Panc1 (cell line): ENCODE measurements at regions of chr7 and their contacts with region 1.

Region 1: GRCh38 chr7:5450549-5451372 is 27.1 kb upstream of the TNRC18 start:
- DNase-seq: no peak
- ATAC-seq: peak; percentile 76
- H3K4me3 ChIP-seq: no peak overlapping the region
- H3K27ac ChIP-seq: 0 out of 2 replicates have a peak overlapping the region, but pooled peaks have one; percentile 18
- H3K4me1 ChIP-seq: peaks cover 36% of the 10 kb centered on the region
- H3K27me3 ChIP-seq: no peaks in the 10 kb centered on the region
- CTCF ChIP-seq: no peak; the same call in 1 of the 2 replicates

Region 2: DNA sequence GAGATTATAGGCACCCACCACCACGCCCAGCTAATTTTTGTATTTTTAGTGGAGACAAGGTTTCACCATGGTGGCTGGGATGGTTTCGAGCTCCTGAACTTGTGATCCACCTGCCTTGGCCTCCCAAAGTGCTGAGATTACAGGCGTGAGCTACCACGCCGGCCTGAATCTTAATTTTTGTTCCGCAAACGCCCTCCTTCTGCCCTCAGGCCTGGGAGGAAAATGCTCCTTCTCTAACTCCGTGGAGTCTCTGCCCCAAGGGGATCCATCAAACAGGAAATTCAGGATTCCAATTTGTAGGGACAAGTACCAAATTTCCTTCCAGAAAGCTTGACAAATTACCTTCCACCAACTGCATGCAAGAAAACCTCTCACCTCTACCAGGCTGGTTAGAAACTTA is 361.9 kb before region 1 on chr7:
- CTCF ChIA-PET with region 1: no interaction called
- POLR2A ChIA-PET with region 1: no interaction called
- in situ Hi-C with region 1: no loop called
- intact Hi-C with region 1: loop called (anchors 5 kb)
- DNase-seq: no peak
- ATAC-seq: no peak
- H3K4me3 ChIP-seq: no peak overlapping the region
- H3K27ac ChIP-seq: no peak overlapping the region
- H3K4me1 ChIP-seq: no peaks in the 10 kb centered on the region
- H3K27me3 ChIP-seq: peaks cover 3% of the 10 kb centered on the region; the same call in 1 of the 2 replicates
- CTCF ChIP-seq: no peak

Region 3: GRCh38 chr7:5248201-5248885 is 202.4 kb before region 1 on chr7:
- CTCF ChIA-PET with region 1: interaction called, 3 read pairs
- POLR2A ChIA-PET with region 1: interaction called, 3 read pairs
- in situ Hi-C with region 1: no loop called
- intact Hi-C with region 1: loop called (anchors 10 kb)
- DNase-seq: no peak
- ATAC-seq: peak; percentile 24; the same call in 1 of the 2 replicates
- H3K4me3 ChIP-seq: no peak overlapping the region
- H3K27ac ChIP-seq: no peak overlapping the region
- H3K4me1 ChIP-seq: no peaks in the 10 kb centered on the region
- H3K27me3 ChIP-seq: no peaks in the 10 kb centered on the region
- CTCF ChIP-seq: no peak

Region 4: GRCh38 chr7:5363729-5364128 is 87.0 kb before region 1 on chr7:
- CTCF ChIA-PET with region 1: interaction called, 11 read pairs
- POLR2A ChIA-PET with region 1: interaction called, 16 read pairs
- in situ Hi-C with region 1: no loop called
- intact Hi-C with region 1: no loop called
- DNase-seq: no peak
- ATAC-seq: no peak
- H3K4me3 ChIP-seq: no peak overlapping the region
- H3K27ac ChIP-seq: no peak overlapping the region
- H3K4me1 ChIP-seq: peaks cover 7% of the 10 kb centered on the region
- H3K27me3 ChIP-seq: no peaks in the 10 kb centered on the region
- CTCF ChIP-seq: no peak

Region 5: DNA sequence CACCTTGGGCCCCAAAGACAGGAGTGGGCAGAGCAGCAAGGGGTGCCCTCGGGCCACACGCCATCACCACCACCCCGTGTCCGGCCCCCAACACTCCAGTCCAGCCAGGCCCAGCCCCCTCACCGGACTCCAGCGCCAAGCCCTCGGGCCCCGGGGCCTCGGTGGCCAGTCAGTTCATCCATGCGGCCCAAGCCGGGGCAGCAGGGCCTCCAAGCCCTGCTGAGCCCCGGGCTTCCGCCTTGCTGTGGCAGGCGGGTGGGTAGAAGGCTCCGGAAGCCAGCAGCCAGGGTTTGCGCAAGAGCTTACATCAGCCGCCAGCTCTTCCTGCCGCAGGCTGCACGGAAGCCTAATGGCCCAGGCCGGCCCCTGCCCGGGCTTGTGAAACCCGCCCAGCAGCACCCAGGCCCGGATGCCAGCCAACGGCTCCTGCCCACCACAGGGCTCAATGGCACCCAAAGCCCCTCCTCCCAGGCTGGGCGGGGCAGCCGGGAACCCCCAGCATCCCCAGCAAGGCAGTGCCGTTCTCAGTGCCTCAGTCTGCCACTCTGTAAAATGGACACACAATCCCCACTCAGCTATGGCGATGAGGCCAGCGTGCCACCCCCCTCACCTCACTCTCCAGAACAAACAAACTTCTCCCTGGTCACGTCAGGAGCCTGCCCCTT is 53.6 kb before region 1 on chr7:
- CTCF ChIA-PET with region 1: interaction called, 10 read pairs
- POLR2A ChIA-PET with region 1: interaction called, 3 read pairs
- in situ Hi-C with region 1: no loop called
- intact Hi-C with region 1: no loop called
- DNase-seq: no peak
- ATAC-seq: peak; percentile 86
- H3K4me3 ChIP-seq: peak overlapping the region; percentile 47 to 63
- H3K27ac ChIP-seq: peak overlapping the region; percentile 94
- H3K4me1 ChIP-seq: peaks cover 29% of the 10 kb centered on the region
- H3K27me3 ChIP-seq: no peaks in the 10 kb centered on the region
- CTCF ChIP-seq: no peak

Region 6: DNA sequence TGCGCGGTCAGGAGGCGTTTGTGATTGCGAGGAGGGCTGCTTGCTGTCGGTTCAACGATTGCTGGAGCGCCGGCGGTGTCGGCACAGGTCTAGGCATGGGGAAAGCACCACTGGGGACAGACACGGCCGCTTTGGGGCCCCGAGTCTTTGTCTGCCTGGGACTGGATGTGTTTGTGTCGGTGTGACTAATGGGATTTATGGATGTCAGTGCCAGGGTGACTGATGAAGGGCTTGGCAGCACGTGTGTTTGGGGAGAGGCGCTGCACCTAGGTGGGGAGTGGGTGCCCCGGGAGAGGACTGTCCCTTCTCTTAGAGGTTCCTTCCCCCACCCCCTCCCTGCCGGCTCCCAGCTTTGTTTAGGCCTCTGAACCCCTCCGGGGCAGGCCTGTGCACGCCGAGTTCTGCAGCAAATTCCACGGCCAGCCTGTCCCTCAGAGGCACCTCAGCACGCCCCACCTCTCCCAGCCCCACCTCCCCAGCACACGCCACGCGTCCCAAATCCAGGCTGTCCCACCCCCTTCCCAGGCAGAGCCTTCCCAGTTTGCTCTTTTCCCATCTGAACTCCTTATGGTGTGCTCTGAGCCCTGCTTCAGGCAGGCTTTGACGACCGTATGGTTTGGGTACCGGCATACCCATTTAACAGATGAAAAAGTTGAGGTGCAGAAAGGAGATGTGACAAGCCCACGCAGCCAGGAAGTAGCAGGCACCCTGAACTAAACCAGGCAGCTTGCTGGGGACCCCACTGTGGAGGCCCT is 20.7 kb before region 1 on chr7:
- CTCF ChIA-PET with region 1: interaction called, 12 read pairs
- POLR2A ChIA-PET with region 1: no interaction called
- in situ Hi-C with region 1: no loop called
- intact Hi-C with region 1: no loop called
- DNase-seq: no peak
- ATAC-seq: no peak
- H3K4me3 ChIP-seq: peak overlapping the region; percentile 89 to 98
- H3K27ac ChIP-seq: peak overlapping the region; percentile 99
- H3K4me1 ChIP-seq: peaks cover 8% of the 10 kb centered on the region
- H3K27me3 ChIP-seq: no peaks in the 10 kb centered on the region
- CTCF ChIP-seq: no peak